ENCODE measurements at regions of chr2 and their contacts with region 1.

Region 1: GRCh38 chr2:229416116-229416694 is 145.1 kb upstream of the PID1 start:
- DNase-seq: peak; percentile 92 to 97 (median 96)
- H3K4me3 ChIP-seq: peak overlapping the region in 1 of 3 experiments; percentile 50
- H3K4me3 Mint-ChIP-seq: peak overlapping the region; percentile 26 to 78
- H3K27ac ChIP-seq: peak overlapping the region; percentile 88 to 99
- H3K27ac Mint-ChIP-seq: peak overlapping the region; percentile 99 to 100 (median 99)
- H3K4me1 ChIP-seq: peaks cover 49 to 61% of the 10 kb centered on the region in 2 donors
- H3K4me1 Mint-ChIP-seq: peaks cover 55% of the 10 kb centered on the region
- H3K27me3 ChIP-seq: no peaks in the 10 kb centered on the region
- H3K27me3 Mint-ChIP-seq: peaks cover 0 to 3% (median 2%) of the 10 kb centered on the region in 3 donors
- CTCF ChIP-seq: no peak

Region 2: DNA sequence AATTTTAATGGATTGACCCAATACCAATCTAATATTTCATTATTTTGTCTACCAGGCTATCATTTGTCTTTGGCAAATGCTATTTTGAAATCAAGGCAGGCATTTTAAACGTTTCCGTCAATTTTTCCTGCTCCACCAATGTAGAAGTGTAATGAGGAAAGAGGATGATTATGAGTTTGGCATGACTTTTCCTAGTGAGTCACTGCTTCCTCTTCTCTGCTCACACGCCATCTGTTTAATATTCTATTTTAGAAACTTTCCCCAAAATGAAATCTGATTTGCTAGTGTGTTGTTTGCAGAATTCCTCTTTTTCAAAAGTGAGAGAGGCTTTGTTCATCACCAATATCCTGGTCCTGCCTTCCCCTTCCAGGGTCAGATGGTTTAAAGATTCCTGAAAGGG is 102.6 kb before region 1 on chr2:
- intact Hi-C with region 1: loop called in 1 of 2 experiments (anchors 5 kb)
- DNase-seq: peak; percentile 92 to 99 (median 96)
- H3K4me3 ChIP-seq: no peak overlapping the region
- H3K4me3 Mint-ChIP-seq: no peak overlapping the region
- H3K27ac ChIP-seq: peak overlapping the region; percentile 86 to 98
- H3K27ac Mint-ChIP-seq: no peak overlapping the region
- H3K4me1 ChIP-seq: peaks cover 56 to 70% of the 10 kb centered on the region in 2 donors
- H3K4me1 Mint-ChIP-seq: peaks cover 13% of the 10 kb centered on the region
- H3K27me3 ChIP-seq: no peaks in the 10 kb centered on the region
- H3K27me3 Mint-ChIP-seq: no peaks in the 10 kb centered on the region
- CTCF ChIP-seq: no peak

Measured in CD14-positive monocyte (primary cell).